ENCODE measurements at regions of chr17 and their contacts with region 1.

Region 1: DNA sequence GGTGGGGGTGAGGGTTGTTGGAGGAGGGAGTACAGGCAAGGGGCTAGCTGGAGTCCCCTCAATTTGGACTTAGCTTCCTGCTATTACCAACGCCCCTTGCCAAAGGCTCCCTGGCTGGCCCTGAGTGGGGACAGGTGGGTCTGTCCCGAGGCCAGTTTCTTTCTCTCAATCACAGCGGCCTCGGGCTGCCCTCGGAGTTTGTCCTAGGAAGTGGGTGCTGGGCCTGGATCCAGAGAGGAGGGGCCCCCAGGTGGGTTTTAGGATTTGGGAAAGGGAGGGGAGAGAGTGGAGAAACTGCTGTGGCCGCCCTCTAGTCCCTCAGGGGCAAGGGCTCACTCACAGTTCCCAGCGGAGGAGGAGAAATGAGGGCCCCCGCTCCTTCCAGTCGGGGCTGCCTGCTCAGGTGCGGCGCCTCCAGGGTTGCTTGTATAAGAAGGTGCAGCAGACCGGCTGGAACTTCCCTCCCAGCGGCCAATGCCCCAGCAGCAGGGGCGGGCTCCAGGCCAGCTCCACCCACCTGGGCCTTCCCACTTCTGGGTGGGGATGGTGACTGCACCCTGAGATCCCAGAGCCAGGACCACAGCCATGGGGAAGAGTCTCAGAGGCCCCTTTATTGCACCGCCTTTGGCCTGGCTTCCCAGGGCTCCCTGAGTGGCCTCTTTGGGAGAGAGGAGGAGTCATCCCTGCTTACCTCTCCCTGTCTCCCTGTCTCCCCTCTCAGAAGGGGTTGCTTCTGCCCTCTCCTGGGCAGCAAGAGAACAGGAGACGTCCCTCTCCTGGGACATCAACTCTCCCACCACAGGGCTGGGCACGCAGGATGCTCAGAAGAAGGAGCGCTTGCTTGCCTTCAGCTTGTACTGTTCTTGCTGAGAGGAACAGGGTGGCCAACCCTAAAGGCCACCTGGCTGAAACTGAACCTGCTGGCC is 112.0 kb upstream of the SMURF2 start:
- DNase-seq: no peak
- ATAC-seq: no peak
- H3K4me3 Mint-ChIP-seq: no peak overlapping the region
- H3K27ac Mint-ChIP-seq: no peak overlapping the region
- H3K4me1 Mint-ChIP-seq: peaks cover 23% of the 10 kb centered on the region
- H3K27me3 Mint-ChIP-seq: peaks cover 5% of the 10 kb centered on the region
- CTCF ChIP-seq: no peak

Region 2: DNA sequence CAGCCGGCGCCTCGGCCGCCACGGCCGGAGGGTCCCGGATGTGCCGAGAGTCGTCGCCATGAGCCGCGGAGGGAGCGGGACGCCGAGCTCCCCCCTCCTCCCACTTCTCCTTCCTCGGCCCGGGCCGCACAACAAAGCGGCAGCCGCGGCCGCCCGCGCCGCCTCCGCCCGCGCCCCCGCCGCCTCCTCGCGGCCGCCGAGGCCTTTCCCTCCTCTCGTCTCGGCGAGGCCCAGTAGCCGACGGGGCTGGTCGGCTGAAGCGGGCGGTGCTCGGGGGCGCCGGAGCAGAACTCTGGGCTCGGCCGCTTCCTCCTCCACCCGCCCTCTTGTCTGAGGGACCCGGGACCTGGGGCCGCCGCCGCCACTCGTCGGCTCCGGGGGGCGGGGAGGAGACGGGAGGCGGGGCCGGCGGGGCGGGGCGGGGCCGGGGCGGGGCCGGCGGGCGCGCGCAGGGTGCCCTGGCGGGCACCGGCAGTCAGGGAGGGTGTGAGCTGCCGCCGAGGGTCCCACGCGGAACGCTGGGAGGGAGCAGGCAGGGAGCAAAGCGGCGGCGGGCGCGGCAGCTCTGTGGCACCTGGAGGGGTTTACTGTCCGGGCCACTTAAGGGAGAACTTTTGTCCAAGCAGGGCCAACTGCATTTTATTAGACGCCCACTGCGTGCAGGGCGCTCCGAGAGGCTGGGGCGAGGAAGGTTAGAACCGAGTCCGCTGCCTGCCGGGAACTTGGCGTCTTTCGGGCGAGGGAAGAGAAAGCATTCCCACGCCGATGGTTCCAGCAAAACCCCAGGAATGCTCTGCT is 111.9 kb before region 1 on chr17 and contains the start of gene SMURF2:
- CTCF ChIA-PET with region 1: no interaction called
- POLR2A ChIA-PET with region 1: no interaction called
- intact Hi-C with region 1: loop called (anchors 2 kb)
- DNase-seq: peak; percentile 83
- ATAC-seq: peak; percentile 85
- H3K4me3 Mint-ChIP-seq: peak within 1 kb of the TSS; percentile 96
- H3K27ac Mint-ChIP-seq: peak within 1 kb of the TSS; percentile 95
- H3K4me1 Mint-ChIP-seq: peaks cover 28% of the 10 kb centered on the region
- H3K27me3 Mint-ChIP-seq: no peaks in the 10 kb centered on the region
- CTCF ChIP-seq: no peak
- total RNA-seq, gene SMURF2: 18.9 and 23.0 TPM in 2 replicates

Region 3: GRCh38 chr17:64920026-64920418 is 145.9 kb after region 1 on chr17:
- CTCF ChIA-PET with region 1: interaction called, 7 read pairs
- POLR2A ChIA-PET with region 1: interaction called, 11 read pairs
- intact Hi-C with region 1: loop called (anchors 5 kb)
- DNase-seq: no peak
- ATAC-seq: no peak
- H3K4me3 Mint-ChIP-seq: peak overlapping the region; percentile 87
- H3K27ac Mint-ChIP-seq: peak overlapping the region; percentile 92
- H3K4me1 Mint-ChIP-seq: peaks cover 47% of the 10 kb centered on the region
- H3K27me3 Mint-ChIP-seq: no peaks in the 10 kb centered on the region
- CTCF ChIP-seq: no peak

Region 4: GRCh38 chr17:64938925-64939474 is 164.9 kb after region 1 on chr17:
- CTCF ChIA-PET with region 1: interaction called, 10 read pairs
- POLR2A ChIA-PET with region 1: no interaction called
- intact Hi-C with region 1: loop called (anchors 1 kb)
- DNase-seq: peak; percentile 48
- ATAC-seq: peak; percentile 81
- H3K4me3 Mint-ChIP-seq: no peak overlapping the region
- H3K27ac Mint-ChIP-seq: no peak overlapping the region
- H3K4me1 Mint-ChIP-seq: peaks cover 2% of the 10 kb centered on the region
- H3K27me3 Mint-ChIP-seq: no peaks in the 10 kb centered on the region
- CTCF ChIP-seq: no peak

Region 5: DNA sequence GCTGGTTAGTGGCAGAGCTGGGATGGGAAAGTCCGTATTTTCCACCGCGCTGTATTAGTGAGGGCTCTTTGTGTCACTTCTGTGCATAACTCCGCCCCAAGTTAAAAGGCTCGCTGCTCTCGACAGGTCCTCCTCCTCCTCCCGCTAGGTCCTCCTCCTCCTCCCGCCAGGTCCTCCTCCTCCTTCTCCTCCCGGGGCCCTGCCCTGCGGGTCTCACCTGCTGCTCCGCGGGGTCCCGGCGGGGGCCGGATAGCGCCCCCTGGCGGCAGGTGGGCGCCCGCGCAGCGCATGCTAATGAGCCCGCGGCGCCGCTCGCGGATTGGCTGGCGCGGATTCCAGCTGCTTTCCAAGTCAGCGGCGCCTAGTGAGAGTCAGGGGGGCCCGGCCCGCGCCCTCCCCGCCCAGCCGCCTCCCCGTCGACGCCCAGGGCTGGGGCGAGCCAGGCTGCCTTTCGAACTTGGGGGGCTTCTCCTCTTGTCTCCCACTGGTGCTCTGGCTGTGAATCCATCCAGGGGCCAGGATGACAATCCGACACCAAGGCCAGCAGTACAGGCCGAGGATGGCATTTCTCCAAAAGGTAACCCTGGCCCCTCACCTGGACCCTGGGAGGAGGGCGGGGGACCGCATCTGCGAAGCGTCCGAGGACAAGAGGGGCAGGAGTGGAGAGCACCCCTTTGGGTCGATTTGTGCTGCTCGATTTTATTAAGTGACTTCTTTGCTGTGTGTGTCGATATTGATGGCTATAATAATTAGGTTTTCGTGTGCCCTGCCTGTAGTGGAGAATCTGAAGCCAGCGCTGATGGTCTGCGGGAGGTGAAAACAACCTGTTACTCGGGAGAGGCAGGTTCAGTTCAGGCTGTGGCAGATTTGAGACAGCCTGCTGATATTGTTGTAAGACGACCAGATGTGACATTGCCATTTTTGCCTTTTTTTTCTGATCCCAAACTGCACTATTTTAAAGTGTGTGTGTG is 363.2 kb after region 1 on chr17 and contains the start of gene RGS9:
- CTCF ChIA-PET with region 1: no interaction called
- POLR2A ChIA-PET with region 1: no interaction called
- intact Hi-C with region 1: loop called (anchors 1 kb)
- DNase-seq: peak; percentile 84
- ATAC-seq: peak; percentile 91
- H3K4me3 Mint-ChIP-seq: peak within 1 kb of the TSS; percentile 81
- H3K27ac Mint-ChIP-seq: peak within 1 kb of the TSS; percentile 65
- H3K4me1 Mint-ChIP-seq: peaks cover 20% of the 10 kb centered on the region
- H3K27me3 Mint-ChIP-seq: peaks cover 9% of the 10 kb centered on the region
- CTCF ChIP-seq: no peak
- total RNA-seq, gene RGS9: 3.2 TPM in 2 replicates

Region 6: DNA sequence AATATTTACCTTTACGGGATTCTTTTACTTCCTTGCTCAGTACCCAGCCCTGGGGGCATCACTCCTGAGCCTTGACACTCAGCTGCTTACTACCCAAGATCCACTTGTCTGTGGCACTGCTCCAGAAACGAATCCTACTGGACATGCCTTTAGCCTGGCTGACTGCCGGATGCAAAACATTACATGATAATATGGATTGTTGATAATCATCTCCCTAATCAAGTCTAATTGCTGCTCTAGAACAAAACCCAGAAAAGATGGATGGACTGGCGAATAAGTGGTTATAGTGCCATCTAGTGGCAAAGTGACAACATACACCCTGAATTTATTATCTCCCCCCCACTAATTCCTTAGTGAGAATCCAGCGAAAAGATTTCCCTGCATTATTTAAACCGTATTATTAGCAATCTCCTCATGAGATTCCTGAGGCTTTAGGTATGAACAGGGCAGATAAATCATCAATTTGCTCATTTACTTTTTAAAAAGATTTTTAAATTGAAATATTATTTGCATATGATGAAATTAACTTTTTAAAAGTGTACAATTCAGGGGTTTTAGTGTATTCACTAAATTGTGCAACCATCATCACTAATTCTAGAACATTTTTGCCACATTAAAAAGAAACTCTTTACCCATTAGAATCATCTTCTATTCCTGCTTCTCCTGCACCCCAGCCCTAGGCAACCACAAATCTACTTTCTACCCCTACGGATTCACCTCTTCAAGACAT is 424.7 kb after region 1 on chr17:
- CTCF ChIA-PET with region 1: no interaction called
- POLR2A ChIA-PET with region 1: no interaction called
- intact Hi-C with region 1: loop called (anchors 1 kb)
- DNase-seq: no peak
- ATAC-seq: peak; percentile 67
- H3K4me3 Mint-ChIP-seq: no peak overlapping the region
- H3K27ac Mint-ChIP-seq: peak overlapping the region; percentile 8
- H3K4me1 Mint-ChIP-seq: no peaks in the 10 kb centered on the region
- H3K27me3 Mint-ChIP-seq: peaks cover 2% of the 10 kb centered on the region
- CTCF ChIP-seq: peak; percentile 78

Region 7: GRCh38 chr17:66165513-66166123 is 1391.5 kb after region 1 on chr17:
- CTCF ChIA-PET with region 1: no interaction called
- POLR2A ChIA-PET with region 1: no interaction called
- intact Hi-C with region 1: loop called (anchors 2 kb)
- DNase-seq: no peak
- ATAC-seq: no peak
- H3K4me3 Mint-ChIP-seq: no peak overlapping the region
- H3K27ac Mint-ChIP-seq: no peak overlapping the region
- H3K4me1 Mint-ChIP-seq: no peaks in the 10 kb centered on the region
- H3K27me3 Mint-ChIP-seq: no peaks in the 10 kb centered on the region
- CTCF ChIP-seq: peak; percentile 84

Measured in activated B cell treated with CpG ODN at 0.5 μM for 24 hours (primary cell).